CD8-positive, alpha-beta T cell (primary cell): ENCODE measurements at regions of chr2 and their contacts with region 1.

Region 1: DNA sequence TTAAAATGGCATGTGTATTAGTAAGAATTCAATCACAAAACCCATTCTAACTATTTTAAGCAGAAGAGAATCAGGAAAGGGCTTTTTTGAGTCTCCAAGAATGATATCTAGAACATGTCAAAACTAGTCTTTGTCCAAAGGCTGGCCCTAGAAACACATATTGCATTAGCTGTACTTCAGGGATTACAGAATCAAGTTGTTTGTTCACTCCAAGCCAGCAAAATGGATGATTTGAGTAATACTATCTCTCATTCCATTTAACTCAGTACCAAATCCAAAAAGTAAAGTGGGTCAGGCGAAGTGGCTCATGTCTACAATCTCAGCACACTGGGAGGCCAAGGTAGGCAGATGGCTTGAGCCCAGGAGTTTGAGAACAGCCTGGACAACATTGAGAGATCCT is 41.3 kb downstream of the ATF2 start:
- DNase-seq: no peak
- ATAC-seq: no peak
- H3K4me3 ChIP-seq: no peak overlapping the region
- H3K4me3 Mint-ChIP-seq: no peak overlapping the region
- H3K27ac ChIP-seq: no peak overlapping the region
- H3K27ac Mint-ChIP-seq: no peak overlapping the region
- H3K4me1 ChIP-seq: no peaks in the 10 kb centered on the region
- H3K4me1 Mint-ChIP-seq: peaks cover 28% of the 10 kb centered on the region
- H3K27me3 ChIP-seq: no peaks in the 10 kb centered on the region
- H3K27me3 Mint-ChIP-seq: no peaks in the 10 kb centered on the region
- CTCF ChIP-seq: no peak

Region 2: DNA sequence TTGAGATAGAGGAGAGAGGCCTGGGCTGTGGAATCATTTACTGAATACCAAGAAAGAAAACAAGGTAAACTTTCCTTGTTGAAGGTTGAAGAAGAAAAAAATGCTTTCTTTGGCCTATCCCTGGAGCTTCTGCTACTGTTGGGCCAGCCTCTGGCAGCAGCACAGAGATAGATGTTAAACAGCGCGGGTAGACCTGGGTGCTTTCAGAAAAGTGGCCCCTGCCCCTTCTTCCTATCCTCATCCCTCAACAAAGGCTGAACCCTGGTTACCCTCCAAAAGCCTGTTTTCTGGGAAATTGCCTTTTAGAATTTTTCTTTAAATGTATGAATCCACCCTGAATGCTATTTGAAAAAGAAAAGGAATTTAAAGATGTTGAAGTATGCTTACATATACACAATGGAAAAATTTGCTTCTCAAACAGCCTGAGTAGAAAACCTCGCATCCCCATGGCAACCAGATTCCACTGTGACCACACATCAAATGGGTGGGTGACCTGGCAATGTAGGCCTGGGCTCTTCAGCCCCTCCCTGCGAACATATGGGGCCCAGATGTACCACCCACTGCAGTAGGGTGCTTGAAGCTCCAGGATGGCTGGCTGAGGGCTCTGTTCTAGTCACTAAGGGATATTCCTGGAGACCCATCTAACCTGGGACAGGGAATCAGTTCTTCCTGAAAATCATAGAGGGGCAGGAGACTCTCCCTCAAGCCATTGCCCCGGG is 339.0 kb before region 1 on chr2:
- CTCF ChIA-PET with region 1: no interaction called
- POLR2A ChIA-PET with region 1: no interaction called
- intact Hi-C with region 1: no loop called
- DNase-seq: peak in 1 of 9 experiments; percentile 40
- ATAC-seq: no peak
- H3K4me3 ChIP-seq: no peak overlapping the region
- H3K4me3 Mint-ChIP-seq: no peak overlapping the region
- H3K27ac ChIP-seq: no peak overlapping the region
- H3K27ac Mint-ChIP-seq: no peak overlapping the region
- H3K4me1 ChIP-seq: peaks cover 10% of the 10 kb centered on the region
- H3K4me1 Mint-ChIP-seq: peaks cover 14% of the 10 kb centered on the region
- H3K27me3 ChIP-seq: no peaks in the 10 kb centered on the region
- H3K27me3 Mint-ChIP-seq: no peaks in the 10 kb centered on the region
- CTCF ChIP-seq: no peak

Region 3: DNA sequence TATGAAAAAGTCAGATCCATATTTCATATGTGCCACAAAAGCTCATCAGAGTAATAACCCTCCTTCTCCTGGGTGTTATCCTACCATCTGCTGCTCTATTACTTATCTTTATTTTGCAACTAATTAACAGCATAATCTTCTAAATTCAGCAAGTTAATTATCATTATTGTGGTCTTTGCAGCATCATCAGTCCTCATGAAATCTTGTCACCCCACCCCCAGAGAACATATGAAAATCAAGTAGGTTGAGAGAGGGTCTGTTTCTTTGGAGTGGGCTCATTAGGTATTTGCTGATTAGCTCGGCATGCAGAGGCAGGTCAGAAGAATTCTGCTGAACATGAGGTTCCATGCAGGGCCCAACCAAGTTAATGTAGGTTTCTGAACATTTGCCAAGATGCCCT is 23.5 kb before region 1 on chr2:
- CTCF ChIA-PET with region 1: no interaction called
- POLR2A ChIA-PET with region 1: no interaction called
- intact Hi-C with region 1: loop called in 1 of 2 experiments (anchors 2 kb)
- DNase-seq: no peak
- ATAC-seq: no peak
- H3K4me3 ChIP-seq: no peak overlapping the region
- H3K4me3 Mint-ChIP-seq: no peak overlapping the region
- H3K27ac ChIP-seq: no peak overlapping the region
- H3K27ac Mint-ChIP-seq: no peak overlapping the region
- H3K4me1 ChIP-seq: no peaks in the 10 kb centered on the region
- H3K4me1 Mint-ChIP-seq: peaks cover 2% of the 10 kb centered on the region
- H3K27me3 ChIP-seq: no peaks in the 10 kb centered on the region
- H3K27me3 Mint-ChIP-seq: no peaks in the 10 kb centered on the region
- CTCF ChIP-seq: no peak

Region 4: DNA sequence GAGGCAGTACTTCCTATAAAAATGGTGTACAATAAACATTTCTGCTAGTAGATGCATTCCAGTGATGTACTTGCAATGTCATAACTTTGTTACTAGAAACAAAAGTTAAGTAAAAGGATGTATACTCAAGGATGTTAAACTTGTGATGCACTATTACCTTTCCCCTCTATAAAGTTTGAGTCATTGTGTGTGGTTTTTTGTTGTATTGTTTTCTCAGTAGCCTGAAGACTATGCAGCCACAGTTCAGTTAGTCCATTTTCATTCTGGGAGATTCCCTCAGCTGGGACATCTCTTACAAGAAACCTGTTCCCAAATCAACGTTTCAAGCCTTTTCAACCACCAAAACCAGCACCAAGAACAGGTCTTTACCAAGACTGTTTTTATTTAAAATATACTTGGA is 49.2 kb after region 1 on chr2:
- CTCF ChIA-PET with region 1: no interaction called
- POLR2A ChIA-PET with region 1: no interaction called
- intact Hi-C with region 1: loop called in 1 of 2 experiments (anchors 5 kb)
- DNase-seq: no peak
- ATAC-seq: no peak
- H3K4me3 ChIP-seq: no peak overlapping the region
- H3K4me3 Mint-ChIP-seq: no peak overlapping the region
- H3K27ac ChIP-seq: no peak overlapping the region
- H3K27ac Mint-ChIP-seq: no peak overlapping the region
- H3K4me1 ChIP-seq: peaks cover 7% of the 10 kb centered on the region
- H3K4me1 Mint-ChIP-seq: peaks cover 21% of the 10 kb centered on the region
- H3K27me3 ChIP-seq: no peaks in the 10 kb centered on the region
- H3K27me3 Mint-ChIP-seq: no peaks in the 10 kb centered on the region
- CTCF ChIP-seq: no peak